Naive thymus-derived CD4-positive, alpha-beta T cell (primary cell): ENCODE measurements at regions of chr5 and their contacts with region 1.

Region 1: DNA sequence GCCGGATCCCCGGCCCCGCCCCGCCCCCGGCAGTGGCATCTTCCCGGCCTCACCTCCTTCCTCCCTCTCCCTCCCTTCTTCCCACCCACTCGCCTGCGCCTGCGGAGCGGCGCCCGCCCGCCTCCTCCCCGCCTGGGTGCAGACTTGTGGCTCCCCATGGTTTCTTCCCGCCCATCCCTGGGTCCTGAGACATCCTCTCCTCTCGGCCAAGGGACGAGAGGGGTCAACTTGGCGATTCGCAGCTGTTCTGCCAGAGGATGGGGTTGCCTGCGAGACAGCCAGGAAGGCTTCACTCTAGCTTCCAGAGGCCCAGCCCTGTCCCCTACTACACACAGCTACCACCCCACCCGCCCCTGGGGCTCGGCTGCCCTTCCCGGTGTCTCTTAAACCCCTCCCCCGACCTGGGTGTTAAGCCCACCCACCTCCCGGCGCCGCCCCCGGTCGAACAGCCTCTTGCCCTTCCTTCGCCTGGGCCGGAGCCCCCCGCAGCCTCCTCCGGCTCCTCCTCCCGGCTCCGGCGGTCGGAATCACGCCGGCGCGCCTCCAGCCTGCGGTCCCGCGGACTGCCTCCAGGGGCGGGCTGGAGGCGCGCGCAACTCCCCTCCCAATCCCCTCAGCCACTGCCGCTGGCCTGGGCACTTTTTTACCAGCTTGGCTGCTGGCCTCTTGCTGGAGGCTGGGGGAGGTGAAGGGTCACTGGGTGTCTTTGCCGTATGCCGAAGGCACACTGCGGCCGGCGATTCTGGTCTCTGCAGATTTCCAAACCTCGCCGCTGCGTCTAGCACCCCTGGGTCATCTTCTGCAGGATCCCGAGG is 1.9 kb downstream of the JADE2 start:
- DNase-seq: peak; percentile 34 to 82 (median 60)
- ATAC-seq: peak; percentile 45
- H3K4me3 ChIP-seq: peak overlapping the region; percentile 100
- H3K4me3 Mint-ChIP-seq: peak overlapping the region; percentile 91 to 100 (median 98)
- H3K27ac ChIP-seq: peak overlapping the region; percentile 97
- H3K27ac Mint-ChIP-seq: peak overlapping the region; percentile 48 to 99 (median 93)
- H3K4me1 ChIP-seq: peaks cover 43 to 50% of the 10 kb centered on the region in 2 donors
- H3K4me1 Mint-ChIP-seq: peaks cover 37 to 57% (median 52%) of the 10 kb centered on the region in 7 donors
- H3K27me3 ChIP-seq: no peaks in the 10 kb centered on the region
- H3K27me3 Mint-ChIP-seq: no peaks in the 10 kb centered on the region

Region 2: GRCh38 chr5:134304311-134304710 is 223.0 kb before region 1 on chr5:
- CTCF ChIA-PET with region 1: interaction called, 6 read pairs
- POLR2A ChIA-PET with region 1: no interaction called
- intact Hi-C with region 1: loop called (anchors 5 kb)
- DNase-seq: no peak
- ATAC-seq: no peak
- H3K4me3 ChIP-seq: no peak overlapping the region
- H3K4me3 Mint-ChIP-seq: no peak overlapping the region
- H3K27ac ChIP-seq: no peak overlapping the region
- H3K27ac Mint-ChIP-seq: no peak overlapping the region
- H3K4me1 ChIP-seq: no peaks in the 10 kb centered on the region
- H3K4me1 Mint-ChIP-seq: peaks cover 0 to 5% (median 0%) of the 10 kb centered on the region in 7 donors
- H3K27me3 ChIP-seq: no peaks in the 10 kb centered on the region
- H3K27me3 Mint-ChIP-seq: peaks cover 0 to 8% (median 0%) of the 10 kb centered on the region in 5 donors

Region 3: GRCh38 chr5:134446938-134447337 is 80.4 kb before region 1 on chr5:
- CTCF ChIA-PET with region 1: no interaction called
- POLR2A ChIA-PET with region 1: interaction called, 10 read pairs
- intact Hi-C with region 1: no loop called
- DNase-seq: no peak
- ATAC-seq: peak; percentile 37
- H3K4me3 ChIP-seq: no peak overlapping the region
- H3K4me3 Mint-ChIP-seq: no peak overlapping the region
- H3K27ac ChIP-seq: no peak overlapping the region
- H3K27ac Mint-ChIP-seq: peak overlapping the region in 1 of 9 donors; percentile 7
- H3K4me1 ChIP-seq: no peaks in the 10 kb centered on the region
- H3K4me1 Mint-ChIP-seq: peaks cover 0 to 7% (median 0%) of the 10 kb centered on the region in 7 donors
- H3K27me3 ChIP-seq: no peaks in the 10 kb centered on the region
- H3K27me3 Mint-ChIP-seq: peaks cover 0 to 3% (median 0%) of the 10 kb centered on the region in 5 donors

Region 4: DNA sequence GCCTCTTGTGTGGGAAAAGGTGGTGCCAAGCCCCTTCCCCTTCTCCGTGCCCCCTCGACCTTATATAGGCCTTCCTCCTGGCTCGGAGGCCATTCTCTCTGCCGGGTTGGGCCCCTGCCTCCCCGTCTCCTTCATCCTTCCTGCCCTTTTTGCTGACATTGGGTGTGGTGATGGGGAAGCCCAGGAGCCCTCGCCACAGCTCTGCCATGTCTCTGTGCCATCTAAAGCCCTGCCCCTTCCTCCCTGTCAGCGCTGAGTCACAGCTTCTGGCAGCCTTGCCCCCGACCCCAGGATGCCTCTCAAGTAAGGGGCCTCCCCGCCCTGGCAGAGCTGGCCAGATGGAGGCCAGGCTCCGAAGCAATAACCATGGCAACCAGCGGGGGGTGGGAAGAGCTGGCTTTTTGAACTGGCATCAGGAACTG is 28.5 kb after region 1 on chr5:
- CTCF ChIA-PET with region 1: interaction called, 5 read pairs
- POLR2A ChIA-PET with region 1: interaction called, 19 read pairs
- intact Hi-C with region 1: loop called in 1 of 2 experiments (anchors 1 kb)
- DNase-seq: peak; percentile 43 to 88 (median 59)
- ATAC-seq: peak; percentile 94
- H3K4me3 ChIP-seq: no peak overlapping the region
- H3K4me3 Mint-ChIP-seq: peak overlapping the region; percentile 25 to 73 (median 56)
- H3K27ac ChIP-seq: peak overlapping the region; percentile 73
- H3K27ac Mint-ChIP-seq: peak overlapping the region; percentile 76 to 95 (median 89)
- H3K4me1 ChIP-seq: peaks cover 21 to 32% of the 10 kb centered on the region in 2 donors
- H3K4me1 Mint-ChIP-seq: peaks cover 25 to 57% (median 38%) of the 10 kb centered on the region in 7 donors
- H3K27me3 ChIP-seq: no peaks in the 10 kb centered on the region
- H3K27me3 Mint-ChIP-seq: no peaks in the 10 kb centered on the region

Region 5: DNA sequence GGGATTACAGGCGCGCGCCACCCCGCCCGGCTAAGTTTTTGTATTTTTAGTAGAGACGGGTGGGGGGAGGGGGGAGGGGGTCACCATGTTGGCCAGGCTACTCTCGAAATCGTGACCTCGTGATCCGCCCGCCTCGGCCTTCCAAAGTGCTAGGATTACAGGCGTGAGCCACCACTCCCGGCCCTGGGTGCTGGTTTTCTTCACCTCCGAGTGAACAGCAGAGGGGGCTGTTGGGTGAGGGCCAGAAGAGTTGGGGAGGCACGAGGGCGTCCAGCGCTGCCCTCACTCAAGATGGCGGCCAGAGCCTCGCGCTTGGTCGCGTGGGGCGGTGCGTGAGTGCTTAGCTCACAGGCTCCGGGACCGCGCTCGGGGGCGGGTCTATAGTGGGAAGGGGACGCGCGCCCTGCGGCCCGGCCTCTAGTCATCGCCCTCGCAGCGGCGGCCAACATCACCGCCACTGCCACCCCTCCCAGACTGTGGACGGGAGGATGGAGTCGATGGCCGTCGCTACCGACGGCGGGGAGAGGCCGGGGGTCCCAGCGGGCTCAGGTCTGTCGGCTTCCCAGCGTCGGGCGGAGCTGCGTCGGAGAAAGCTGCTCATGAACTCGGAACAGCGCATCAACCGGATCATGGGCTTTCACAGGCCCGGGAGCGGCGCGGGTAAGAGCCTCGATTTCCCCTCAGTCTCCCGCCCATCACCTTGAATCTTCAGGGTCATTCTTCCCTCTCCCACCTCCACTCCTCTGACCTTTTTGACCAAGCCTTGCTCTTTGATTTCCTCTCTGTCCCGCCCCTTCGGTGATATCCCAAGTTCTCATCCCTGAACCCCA is 211.0 kb after region 1 on chr5 and contains the start of gene CAMLG:
- CTCF ChIA-PET with region 1: no interaction called
- POLR2A ChIA-PET with region 1: interaction called, 5 read pairs
- intact Hi-C with region 1: loop called in 1 of 2 experiments (anchors 1 kb)
- DNase-seq: peak; percentile 93 to 96 (median 96)
- ATAC-seq: peak; percentile 98
- H3K4me3 ChIP-seq: peak within 1 kb of the TSS; percentile 91
- H3K4me3 Mint-ChIP-seq: peak within 1 kb of the TSS; percentile 88 to 100 (median 96)
- H3K27ac ChIP-seq: peak within 1 kb of the TSS; percentile 93
- H3K27ac Mint-ChIP-seq: peak within 1 kb of the TSS; percentile 90 to 98 (median 93)
- H3K4me1 ChIP-seq: peaks cover 8 to 10% of the 10 kb centered on the region in 2 donors
- H3K4me1 Mint-ChIP-seq: peaks cover 9 to 34% (median 29%) of the 10 kb centered on the region in 7 donors
- H3K27me3 ChIP-seq: no peaks in the 10 kb centered on the region
- H3K27me3 Mint-ChIP-seq: no peaks in the 10 kb centered on the region
- total RNA-seq, gene CAMLG: 20.4 to 38.1 (median 31.8) TPM